ENCODE measurements at regions of chr4 and their contacts with region 1.

Region 1: DNA sequence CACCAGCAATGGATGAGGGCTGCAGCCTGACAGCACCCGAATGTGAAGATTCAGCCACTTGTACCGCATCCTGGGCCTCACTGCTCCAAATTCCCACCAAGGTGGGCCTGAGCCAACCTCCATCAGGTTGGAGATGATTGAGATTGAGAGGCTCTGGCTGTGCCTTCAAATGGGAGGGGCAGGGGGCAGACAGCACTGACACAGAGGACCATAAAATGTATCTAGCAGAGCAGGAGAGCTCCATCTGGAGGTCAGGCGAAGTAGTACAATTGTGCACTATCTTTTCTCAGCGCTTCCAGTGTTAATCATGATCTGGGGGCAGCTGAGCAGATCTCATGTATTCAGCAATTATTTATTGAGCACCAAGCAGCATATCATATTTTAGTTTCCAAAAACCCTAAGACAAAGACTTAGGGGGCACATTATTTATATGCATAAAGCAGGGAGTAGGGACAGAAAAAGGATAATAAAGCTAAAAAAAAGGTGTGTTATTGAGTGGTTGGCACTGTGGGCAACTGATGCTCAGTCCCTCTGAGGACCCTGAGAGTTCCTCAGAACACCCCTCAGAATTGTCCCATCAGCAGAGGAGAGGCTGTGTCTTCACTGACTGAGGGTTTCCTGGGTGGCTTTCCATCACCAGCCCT is 31.6 kb upstream of the C1QTNF7 start:
- DNase-seq: peak; percentile 38
- H3K4me3 ChIP-seq: no peak overlapping the region
- H3K27ac ChIP-seq: no peak overlapping the region
- H3K4me1 ChIP-seq: no peaks in the 10 kb centered on the region
- H3K27me3 ChIP-seq: no peaks in the 10 kb centered on the region
- CTCF ChIP-seq: peak; percentile 52

Region 2: DNA sequence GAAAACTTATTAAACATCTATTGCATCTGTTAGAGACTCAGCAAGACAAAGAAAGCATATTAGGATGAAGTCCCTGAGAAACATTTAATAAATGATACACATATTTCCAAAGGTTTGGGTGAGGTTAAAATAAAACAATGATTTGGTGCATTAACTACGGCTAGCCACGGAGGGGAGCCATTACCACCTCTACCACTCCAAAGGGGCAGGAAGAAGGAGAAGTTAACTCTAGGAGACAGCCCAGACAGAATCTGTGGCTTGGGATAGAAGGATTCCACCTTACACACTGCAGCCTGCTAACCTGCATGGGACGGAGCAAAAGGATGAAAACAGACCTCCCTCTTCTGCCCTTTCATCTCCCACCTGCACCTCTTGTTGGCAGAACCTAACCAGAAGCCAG is 157.6 kb before region 1 on chr4:
- intact Hi-C with region 1: loop called (anchors 5 kb)
- DNase-seq: no peak
- H3K4me3 ChIP-seq: no peak overlapping the region
- H3K27ac ChIP-seq: no peak overlapping the region
- H3K4me1 ChIP-seq: no peaks in the 10 kb centered on the region
- H3K27me3 ChIP-seq: no peaks in the 10 kb centered on the region
- CTCF ChIP-seq: peak; percentile 33

Region 3: GRCh38 chr4:15707363-15707715 is 311.1 kb after region 1 on chr4:
- intact Hi-C with region 1: no loop called
- DNase-seq: no peak
- H3K4me3 ChIP-seq: no peak overlapping the region
- H3K27ac ChIP-seq: no peak overlapping the region
- H3K4me1 ChIP-seq: peaks cover 2% of the 10 kb centered on the region
- H3K27me3 ChIP-seq: no peaks in the 10 kb centered on the region
- CTCF ChIP-seq: no peak

Measured in colonic mucosa (tissue), 4 donors.